Activated CD8-positive, alpha-beta T cell treated with anti-CD3 and anti-CD28 coated beads, Interleukin-2, amount 10 ng/mL, durations not matched to agents 7 days and 5 days (primary cell): ENCODE measurements at regions of chr14 and their contacts with region 1.

Region 1: GRCh38 chr14:24215495-24216344 is at the start of gene MDP1:
- DNase-seq: peak; percentile 93
- ATAC-seq: peak; percentile 77
- H3K4me3 Mint-ChIP-seq: peak within 1 kb of the TSS; percentile 94
- H3K27ac Mint-ChIP-seq: peak within 1 kb of the TSS; percentile 97
- H3K4me1 Mint-ChIP-seq: peaks cover 46% of the 10 kb centered on the region
- H3K27me3 Mint-ChIP-seq: no peaks in the 10 kb centered on the region
- total RNA-seq, gene MDP1: 16.9 to 18.2 TPM

Region 2: GRCh38 chr14:24095271-24096068 is 120.2 kb before region 1 on chr14:
- CTCF ChIA-PET with region 1: no interaction called
- POLR2A ChIA-PET with region 1: no interaction called
- DNase-seq: peak; percentile 72
- ATAC-seq: peak; percentile 18
- H3K4me3 Mint-ChIP-seq: peak overlapping the region; percentile 100
- H3K27ac Mint-ChIP-seq: peak overlapping the region; percentile 99
- H3K4me1 Mint-ChIP-seq: peaks cover 35% of the 10 kb centered on the region
- H3K27me3 Mint-ChIP-seq: no peaks in the 10 kb centered on the region

Region 3: DNA sequence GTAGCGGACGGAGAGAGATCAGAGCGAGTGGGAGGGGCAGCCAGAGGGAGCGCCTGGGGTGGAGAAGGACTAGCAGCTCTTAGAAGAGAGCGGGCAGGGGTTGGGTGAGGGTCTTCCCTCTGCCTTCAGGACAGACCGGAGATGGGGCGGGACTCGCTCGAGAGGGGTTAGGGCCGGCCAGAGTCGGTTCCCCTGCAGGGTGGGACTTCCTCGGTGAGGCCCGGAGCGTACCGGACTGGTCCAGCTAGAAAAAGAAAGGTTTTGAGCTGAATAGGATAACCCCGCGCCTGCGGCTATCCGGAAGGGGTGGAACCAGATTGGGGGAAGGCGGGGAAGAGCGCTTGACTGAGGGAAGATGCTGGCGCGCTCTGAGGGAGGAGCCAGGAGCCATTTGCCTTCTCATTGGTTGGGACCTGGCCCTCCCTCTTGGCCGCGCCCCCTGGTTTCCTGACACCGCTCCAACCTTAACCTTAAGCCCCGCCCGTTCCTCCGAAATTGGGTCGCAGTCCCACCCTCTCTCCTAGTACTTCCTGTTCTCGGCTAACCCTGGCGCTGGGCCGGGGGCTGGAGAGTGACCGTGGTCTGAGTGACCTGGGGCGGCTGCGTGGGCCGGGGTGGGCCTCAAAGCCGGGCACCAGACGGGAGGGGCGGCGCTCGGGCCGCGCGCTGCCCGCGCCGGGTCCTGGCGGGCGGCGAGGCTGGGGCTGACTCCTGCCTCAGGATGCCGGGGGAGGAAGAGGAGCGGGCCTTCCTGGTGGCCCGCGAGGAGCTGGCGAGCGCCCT is 68.6 kb before region 1 on chr14 and contains the start of gene RNF31:
- CTCF ChIA-PET with region 1: no interaction called
- POLR2A ChIA-PET with region 1: interaction called, 13 read pairs
- DNase-seq: peak; percentile 100
- ATAC-seq: peak; percentile 87
- H3K4me3 Mint-ChIP-seq: peak within 1 kb of the TSS; percentile 88
- H3K27ac Mint-ChIP-seq: peak within 1 kb of the TSS; percentile 95
- H3K4me1 Mint-ChIP-seq: peaks cover 67% of the 10 kb centered on the region
- H3K27me3 Mint-ChIP-seq: no peaks in the 10 kb centered on the region
- total RNA-seq, gene RNF31: 123 to 142 TPM

Region 4: DNA sequence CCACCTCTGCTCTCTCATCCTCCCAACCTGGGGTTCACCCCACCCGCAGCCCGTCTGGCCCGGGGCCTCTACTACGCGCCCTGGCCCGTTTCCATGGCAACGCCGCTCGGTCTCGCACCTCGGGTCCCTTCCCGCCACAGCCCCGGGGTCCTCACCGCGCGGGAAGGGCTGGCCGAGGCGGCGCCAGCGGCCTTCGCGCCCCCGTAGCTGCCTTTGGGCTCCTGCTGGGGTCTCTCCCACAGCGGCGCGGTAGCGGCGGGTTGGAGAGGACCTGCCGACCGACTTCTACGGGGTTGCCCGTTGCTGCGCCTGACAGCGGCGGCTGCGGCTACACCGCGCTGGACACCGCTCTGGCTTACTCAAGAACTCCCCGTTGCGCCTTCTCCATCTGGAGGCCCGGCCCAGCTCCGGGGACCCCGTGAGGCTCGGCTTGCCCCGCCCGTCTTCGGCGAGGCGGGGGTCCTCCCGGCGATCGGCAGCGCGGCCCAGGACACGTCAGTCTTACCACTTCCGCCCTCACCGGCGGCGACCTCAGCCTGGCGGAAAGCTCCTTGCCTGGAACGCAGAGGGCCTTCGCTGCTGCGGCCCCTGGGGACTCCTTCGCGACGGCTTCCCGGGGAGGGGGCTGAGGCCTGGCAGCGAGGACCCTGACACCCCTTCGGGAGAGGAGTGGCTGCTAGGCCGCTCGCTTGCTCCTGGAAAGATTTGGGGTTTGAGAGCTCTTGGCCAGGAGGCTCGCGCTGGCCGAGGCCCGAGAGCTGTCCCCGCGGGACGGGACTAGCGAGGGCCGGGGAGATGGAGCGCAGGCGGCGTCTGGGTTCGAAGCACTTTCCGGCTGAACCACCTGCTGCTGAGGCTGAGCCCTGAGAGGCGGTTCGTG is 20.3 kb before region 1 on chr14 and contains the start of gene TM9SF1:
- CTCF ChIA-PET with region 1: interaction called, 22 read pairs
- POLR2A ChIA-PET with region 1: interaction called, 87 read pairs
- DNase-seq: peak; percentile 92
- ATAC-seq: peak; percentile 88
- H3K4me3 Mint-ChIP-seq: peak within 1 kb of the TSS; percentile 88
- H3K27ac Mint-ChIP-seq: peak within 1 kb of the TSS; percentile 96
- H3K4me1 Mint-ChIP-seq: peaks cover 56% of the 10 kb centered on the region
- H3K27me3 Mint-ChIP-seq: no peaks in the 10 kb centered on the region
- total RNA-seq, gene TM9SF1: 29.3 to 32.8 TPM

Region 5: GRCh38 chr14:24241829-24242443 is 26.2 kb after region 1 on chr14:
- CTCF ChIA-PET with region 1: interaction called, 29 read pairs
- POLR2A ChIA-PET with region 1: interaction called, 28 read pairs
- DNase-seq: peak; percentile 95
- ATAC-seq: peak; percentile 85
- H3K4me3 Mint-ChIP-seq: peak overlapping the region; percentile 94
- H3K27ac Mint-ChIP-seq: peak overlapping the region; percentile 100
- H3K4me1 Mint-ChIP-seq: peaks cover 54% of the 10 kb centered on the region
- H3K27me3 Mint-ChIP-seq: no peaks in the 10 kb centered on the region

Region 6: GRCh38 chr14:24279301-24280186 is 63.8 kb after region 1 on chr14:
- CTCF ChIA-PET with region 1: interaction called, 11 read pairs
- POLR2A ChIA-PET with region 1: no interaction called
- DNase-seq: peak; percentile 44
- ATAC-seq: peak; percentile 69
- H3K4me3 Mint-ChIP-seq: no peak overlapping the region
- H3K27ac Mint-ChIP-seq: peak overlapping the region; percentile 73
- H3K4me1 Mint-ChIP-seq: peaks cover 30% of the 10 kb centered on the region
- H3K27me3 Mint-ChIP-seq: no peaks in the 10 kb centered on the region

Region 7: DNA sequence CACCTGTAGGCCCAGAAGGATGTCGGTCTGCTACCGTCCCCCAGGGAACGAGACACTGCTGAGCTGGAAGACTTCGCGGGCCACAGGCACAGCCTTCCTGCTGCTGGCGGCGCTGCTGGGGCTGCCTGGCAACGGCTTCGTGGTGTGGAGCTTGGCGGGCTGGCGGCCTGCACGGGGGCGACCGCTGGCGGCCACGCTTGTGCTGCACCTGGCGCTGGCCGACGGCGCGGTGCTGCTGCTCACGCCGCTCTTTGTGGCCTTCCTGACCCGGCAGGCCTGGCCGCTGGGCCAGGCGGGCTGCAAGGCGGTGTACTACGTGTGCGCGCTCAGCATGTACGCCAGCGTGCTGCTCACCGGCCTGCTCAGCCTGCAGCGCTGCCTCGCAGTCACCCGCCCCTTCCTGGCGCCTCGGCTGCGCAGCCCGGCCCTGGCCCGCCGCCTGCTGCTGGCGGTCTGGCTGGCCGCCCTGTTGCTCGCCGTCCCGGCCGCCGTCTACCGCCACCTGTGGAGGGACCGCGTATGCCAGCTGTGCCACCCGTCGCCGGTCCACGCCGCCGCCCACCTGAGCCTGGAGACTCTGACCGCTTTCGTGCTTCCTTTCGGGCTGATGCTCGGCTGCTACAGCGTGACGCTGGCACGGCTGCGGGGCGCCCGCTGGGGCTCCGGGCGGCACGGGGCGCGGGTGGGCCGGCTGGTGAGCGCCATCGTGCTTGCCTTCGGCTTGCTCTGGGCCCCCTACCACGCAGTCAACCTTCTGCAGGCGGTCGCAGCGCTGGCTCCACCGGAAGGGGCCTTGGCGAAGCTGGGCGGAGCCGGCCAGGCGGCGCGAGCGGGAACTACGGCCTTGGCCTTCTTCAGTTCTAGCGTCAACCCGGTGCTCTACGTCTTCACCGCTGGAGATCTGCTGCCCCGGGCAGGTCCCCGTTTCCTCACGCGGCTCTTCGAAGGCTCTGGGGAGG is 95.2 kb after region 1 on chr14 and contains the start of gene LTB4R:
- CTCF ChIA-PET with region 1: interaction called, 19 read pairs
- POLR2A ChIA-PET with region 1: interaction called, 5 read pairs
- DNase-seq: peak; percentile 77
- ATAC-seq: peak; percentile 89
- H3K4me3 Mint-ChIP-seq: peak within 1 kb of the TSS; percentile 72
- H3K27ac Mint-ChIP-seq: peak within 1 kb of the TSS; percentile 94
- H3K4me1 Mint-ChIP-seq: peaks cover 84% of the 10 kb centered on the region
- H3K27me3 Mint-ChIP-seq: no peaks in the 10 kb centered on the region
- total RNA-seq, gene LTB4R: 26.9 to 28.0 TPM